ENCODE measurements at regions of chr10 and their contacts with region 1.

Region 1: DNA sequence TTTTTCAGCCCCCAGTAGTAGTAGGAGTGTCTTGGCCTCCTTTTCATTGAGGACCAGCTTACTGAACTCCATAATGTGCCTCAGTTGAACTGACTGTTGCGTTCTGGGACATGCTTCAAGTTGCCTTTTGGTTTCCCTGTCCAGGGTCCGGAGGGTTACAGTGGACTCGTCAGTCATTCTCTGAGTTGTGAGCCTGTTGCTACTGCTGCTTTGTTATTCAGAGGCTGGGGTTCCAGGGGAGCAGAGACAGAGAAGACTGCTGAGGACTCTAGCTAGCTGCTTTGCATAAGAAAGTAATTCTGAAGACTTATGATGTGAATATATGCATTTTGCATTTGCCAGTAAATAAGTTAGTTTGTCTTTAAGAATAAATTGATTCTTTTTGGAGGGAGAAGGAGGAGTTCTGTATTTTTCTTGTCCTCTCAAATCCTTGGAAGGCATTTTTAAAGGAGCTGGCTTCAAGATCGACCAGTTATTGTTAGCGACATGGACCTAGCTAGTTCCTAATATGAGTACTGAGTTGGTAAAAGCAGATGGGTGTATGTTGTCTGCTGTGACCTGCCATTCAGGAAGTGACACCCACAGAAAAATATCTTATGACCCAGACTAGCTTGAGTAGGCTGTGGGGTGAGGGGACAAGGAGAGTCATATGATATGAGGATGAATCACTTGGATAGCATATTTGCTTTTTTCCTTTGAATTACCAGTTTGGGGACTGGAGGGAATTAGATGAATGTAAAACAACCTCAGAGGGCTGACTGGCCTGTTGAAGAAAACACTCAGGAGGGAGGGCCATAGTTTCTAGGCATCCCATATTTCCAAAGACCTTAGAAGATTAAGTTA is 8.3 kb downstream of the PI4K2A start:
- DNase-seq: peak; percentile 82
- H3K4me3 ChIP-seq: no peak overlapping the region
- H3K27ac ChIP-seq: peak overlapping the region; percentile 53
- H3K4me1 ChIP-seq: peaks cover 11% of the 10 kb centered on the region
- H3K27me3 ChIP-seq: no peaks in the 10 kb centered on the region
- CTCF ChIP-seq: no peak

Region 2: GRCh38 chr10:96902731-96903358 is 745.9 kb before region 1 on chr10:
- CTCF ChIA-PET with region 1: no interaction called
- POLR2A ChIA-PET with region 1: no interaction called
- intact Hi-C with region 1: no loop called
- DNase-seq: no peak
- H3K4me3 ChIP-seq: no peak overlapping the region
- H3K27ac ChIP-seq: no peak overlapping the region
- H3K4me1 ChIP-seq: no peaks in the 10 kb centered on the region
- H3K27me3 ChIP-seq: no peaks in the 10 kb centered on the region
- CTCF ChIP-seq: no peak

Region 3: GRCh38 chr10:97623277-97623676 is 25.5 kb before region 1 on chr10:
- CTCF ChIA-PET with region 1: no interaction called
- POLR2A ChIA-PET with region 1: interaction called, 12 read pairs
- intact Hi-C with region 1: no loop called
- DNase-seq: no peak
- H3K4me3 ChIP-seq: no peak overlapping the region
- H3K27ac ChIP-seq: no peak overlapping the region
- H3K4me1 ChIP-seq: no peaks in the 10 kb centered on the region
- H3K27me3 ChIP-seq: no peaks in the 10 kb centered on the region
- CTCF ChIP-seq: no peak

Region 4: GRCh38 chr10:99232360-99232999 is 1583.7 kb after region 1 on chr10:
- CTCF ChIA-PET with region 1: interaction called, 21 read pairs
- POLR2A ChIA-PET with region 1: no interaction called
- intact Hi-C with region 1: no loop called
- DNase-seq: peak; percentile 15
- H3K4me3 ChIP-seq: no peak overlapping the region
- H3K27ac ChIP-seq: no peak overlapping the region
- H3K4me1 ChIP-seq: peaks cover 8% of the 10 kb centered on the region
- H3K27me3 ChIP-seq: peaks cover 96% of the 10 kb centered on the region
- CTCF ChIP-seq: no peak

Measured in A673 (cell line).